CD4-positive, alpha-beta memory T cell (primary cell): ENCODE measurements at regions of chr3 and their contacts with region 1.

Region 1: GRCh38 chr3:160565442-160566403 is at the start of gene KPNA4:
- DNase-seq: peak; percentile 96 to 97 (median 97)
- H3K4me3 ChIP-seq: peak within 1 kb of the TSS; percentile 40 to 72
- H3K4me3 Mint-ChIP-seq: peak within 1 kb of the TSS; percentile 94 to 99 (median 96)
- H3K27ac ChIP-seq: peak within 1 kb of the TSS; percentile 85
- H3K27ac Mint-ChIP-seq: peak within 1 kb of the TSS; percentile 96 to 99 (median 98)
- H3K4me1 ChIP-seq: peaks cover 48% of the 10 kb centered on the region
- H3K4me1 Mint-ChIP-seq: peaks cover 42 to 62% (median 53%) of the 10 kb centered on the region in 4 donors
- H3K27me3 ChIP-seq: no peaks in the 10 kb centered on the region
- H3K27me3 Mint-ChIP-seq: no peaks in the 10 kb centered on the region
- total RNA-seq, gene KPNA4: 46.1 to 50.1 TPM

Region 2: DNA sequence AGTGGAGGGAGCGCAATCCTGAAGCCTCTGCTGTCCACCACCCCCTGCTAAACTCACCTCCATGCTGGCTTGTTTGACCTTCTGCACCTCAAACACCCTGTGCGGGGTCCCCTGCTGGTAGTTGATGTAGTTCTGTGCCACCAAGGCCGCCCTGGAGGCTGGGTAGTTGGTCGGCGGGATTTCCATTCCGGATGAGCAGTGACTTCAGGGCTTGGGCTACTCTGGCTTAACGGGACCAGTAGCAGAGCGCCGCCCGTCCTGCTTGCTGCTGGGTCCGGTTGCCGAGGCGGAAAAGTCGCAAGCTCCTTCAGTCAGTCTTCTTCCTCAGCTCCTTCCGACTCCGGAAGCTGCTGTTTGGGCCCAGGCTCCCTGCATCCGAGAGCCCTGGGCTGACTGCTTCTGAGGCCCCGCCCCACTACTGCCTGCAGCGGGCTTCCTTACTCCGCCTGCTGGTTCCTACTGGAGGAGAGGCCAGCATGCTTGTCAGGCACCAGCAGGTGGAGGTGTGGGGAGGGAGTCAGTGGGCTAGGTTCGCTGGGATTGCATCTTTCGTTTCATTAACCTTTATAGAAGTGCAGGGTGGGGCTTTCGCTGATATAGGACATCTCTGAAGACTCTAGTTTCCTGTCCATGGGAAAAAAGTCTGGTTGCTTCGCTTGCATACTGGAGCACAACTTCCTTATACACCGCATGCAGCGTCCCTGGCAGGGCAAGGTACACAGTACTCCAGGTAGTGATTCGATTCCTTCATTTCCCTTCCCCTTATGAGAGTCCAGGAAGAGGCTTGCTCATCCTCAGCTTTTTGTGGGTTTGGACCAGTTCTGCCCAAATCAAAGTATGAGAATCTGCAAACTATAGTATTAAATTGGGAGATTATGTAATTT is 1893.2 kb before region 1 on chr3 and contains the start of gene LXN:
- CTCF ChIA-PET with region 1: no interaction called
- POLR2A ChIA-PET with region 1: no interaction called
- intact Hi-C with region 1: loop called (anchors 10 kb)
- DNase-seq: peak; percentile 76 to 89 (median 79)
- H3K4me3 ChIP-seq: peak within 1 kb of the TSS; percentile 62 to 64
- H3K4me3 Mint-ChIP-seq: peak within 1 kb of the TSS; percentile 92 to 99 (median 96)
- H3K27ac ChIP-seq: peak within 1 kb of the TSS; percentile 63
- H3K27ac Mint-ChIP-seq: peak within 1 kb of the TSS; percentile 81 to 97 (median 96)
- H3K4me1 ChIP-seq: peaks cover 19% of the 10 kb centered on the region
- H3K4me1 Mint-ChIP-seq: peaks cover 12 to 32% (median 22%) of the 10 kb centered on the region in 4 donors
- H3K27me3 ChIP-seq: no peaks in the 10 kb centered on the region
- H3K27me3 Mint-ChIP-seq: no peaks in the 10 kb centered on the region
- total RNA-seq, gene LXN: 7.7 to 8.1 TPM

Region 3: DNA sequence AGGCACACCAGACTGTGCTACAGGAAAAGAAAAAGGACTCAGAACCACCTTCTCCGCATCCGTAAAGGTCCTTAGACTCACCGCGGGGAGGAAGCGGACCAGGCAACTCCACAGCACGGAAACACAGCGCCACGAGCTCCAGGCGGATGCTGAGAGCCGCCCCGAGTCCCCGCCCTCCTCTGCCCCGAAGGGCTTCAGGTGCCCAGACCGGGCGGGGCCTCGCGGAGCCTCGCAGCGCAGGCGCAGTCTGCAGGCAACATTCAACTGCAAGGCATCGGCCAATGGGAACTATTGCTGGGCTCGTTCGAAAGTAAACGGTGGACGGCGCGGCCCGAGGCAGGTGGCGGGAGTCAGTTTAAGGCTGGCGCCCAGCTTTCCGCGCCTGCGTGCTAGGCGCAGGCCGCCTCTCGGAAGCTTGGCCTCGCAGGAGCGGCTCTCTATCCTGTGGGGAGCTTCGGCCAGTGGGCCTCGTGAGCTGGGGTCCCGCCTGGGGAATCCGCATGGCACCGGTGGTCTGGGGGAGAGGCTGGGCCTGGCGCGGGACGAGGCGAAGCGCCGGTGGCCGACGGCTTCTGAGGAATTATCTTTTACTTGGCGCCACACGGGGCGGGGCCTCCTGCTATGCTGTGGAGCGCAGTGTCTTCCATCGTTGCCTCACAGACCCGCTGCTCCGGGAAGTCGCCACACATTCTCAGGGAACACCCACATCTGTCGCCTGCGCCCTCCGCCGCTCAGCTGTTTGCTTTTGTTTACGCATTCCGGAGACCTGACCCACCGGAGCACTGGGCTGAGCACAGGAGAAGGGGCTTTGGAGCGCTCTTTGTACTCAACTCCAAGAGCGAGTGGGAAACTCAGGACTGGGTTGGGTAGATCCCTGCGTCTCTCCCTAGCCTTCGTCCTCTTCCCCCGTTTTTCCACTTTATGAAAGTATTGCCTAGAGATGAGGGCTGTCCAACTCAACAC is 115.8 kb before region 1 on chr3 and contains the start of gene TRIM59:
- CTCF ChIA-PET with region 1: no interaction called
- POLR2A ChIA-PET with region 1: interaction called, 25 read pairs
- intact Hi-C with region 1: loop called (anchors 1 kb)
- DNase-seq: peak; percentile 93 to 98 (median 97)
- H3K4me3 ChIP-seq: peak within 1 kb of the TSS; percentile 82 to 91
- H3K4me3 Mint-ChIP-seq: peak within 1 kb of the TSS; percentile 93 to 100 (median 98)
- H3K27ac ChIP-seq: peak within 1 kb of the TSS; percentile 81
- H3K27ac Mint-ChIP-seq: peak within 1 kb of the TSS; percentile 92 to 99 (median 97)
- H3K4me1 ChIP-seq: peaks cover 35% of the 10 kb centered on the region
- H3K4me1 Mint-ChIP-seq: peaks cover 18 to 48% (median 33%) of the 10 kb centered on the region in 4 donors
- H3K27me3 ChIP-seq: no peaks in the 10 kb centered on the region
- H3K27me3 Mint-ChIP-seq: no peaks in the 10 kb centered on the region
- total RNA-seq, gene TRIM59: 26.3 to 28.3 TPM

Region 4: DNA sequence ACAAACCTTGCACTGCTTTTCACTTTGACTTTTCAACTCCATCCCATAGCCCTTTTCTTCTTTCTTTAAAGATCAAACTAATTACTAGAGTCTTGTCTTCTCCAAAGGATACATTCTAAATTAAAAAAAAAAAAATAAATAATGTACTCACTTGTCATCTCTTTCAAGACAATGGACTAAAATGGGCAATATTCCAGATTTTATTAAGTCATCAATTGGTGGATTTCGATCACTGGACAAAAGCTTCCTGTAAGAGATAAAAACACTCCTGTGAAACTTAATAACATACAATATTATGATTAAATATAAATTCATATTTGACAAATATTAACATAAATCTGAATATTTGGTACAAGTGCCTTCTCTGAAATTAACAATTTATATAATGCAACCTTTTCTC is 34.4 kb before region 1 on chr3:
- CTCF ChIA-PET with region 1: no interaction called
- POLR2A ChIA-PET with region 1: no interaction called
- intact Hi-C with region 1: loop called (anchors 5 kb)
- DNase-seq: no peak
- H3K4me3 ChIP-seq: no peak overlapping the region
- H3K4me3 Mint-ChIP-seq: no peak overlapping the region
- H3K27ac ChIP-seq: no peak overlapping the region
- H3K27ac Mint-ChIP-seq: peak overlapping the region in 3 of 7 donors; percentile 19 to 64 (median 35)
- H3K4me1 ChIP-seq: no peaks in the 10 kb centered on the region
- H3K4me1 Mint-ChIP-seq: peaks cover 0 to 6% (median 2%) of the 10 kb centered on the region in 4 donors
- H3K27me3 ChIP-seq: no peaks in the 10 kb centered on the region
- H3K27me3 Mint-ChIP-seq: no peaks in the 10 kb centered on the region

Region 5: GRCh38 chr3:160754855-160755747 is 189.4 kb after region 1 on chr3:
- CTCF ChIA-PET with region 1: no interaction called
- POLR2A ChIA-PET with region 1: interaction called, 16 read pairs
- intact Hi-C with region 1: loop called (anchors 1 kb)
- DNase-seq: peak; percentile 86 to 89 (median 88)
- H3K4me3 ChIP-seq: peak overlapping the region; percentile 67 to 96
- H3K4me3 Mint-ChIP-seq: peak overlapping the region; percentile 91 to 98 (median 94)
- H3K27ac ChIP-seq: peak overlapping the region; percentile 69
- H3K27ac Mint-ChIP-seq: peak overlapping the region; percentile 94 to 98 (median 97)
- H3K4me1 ChIP-seq: peaks cover 24% of the 10 kb centered on the region
- H3K4me1 Mint-ChIP-seq: peaks cover 17 to 37% (median 27%) of the 10 kb centered on the region in 4 donors
- H3K27me3 ChIP-seq: no peaks in the 10 kb centered on the region
- H3K27me3 Mint-ChIP-seq: peaks cover 0 to 5% of the 10 kb centered on the region in 2 donors